Activated T-helper 1 cell treated with anti-CD3 and anti-CD28 coated beads, Interleukin-12 subunit alpha, Interleukin-12 subunit beta, Interleukin-2, Interleukin-4 antibody, amounts not matched to agents 30 ng/mL and 10 ng/mL and 1 ng/mL, durations not matched to agents 14 hours and 24 hours and 36 hours (primary cell): ENCODE measurements at regions of chr17 and their contacts with region 1.

Region 1: DNA sequence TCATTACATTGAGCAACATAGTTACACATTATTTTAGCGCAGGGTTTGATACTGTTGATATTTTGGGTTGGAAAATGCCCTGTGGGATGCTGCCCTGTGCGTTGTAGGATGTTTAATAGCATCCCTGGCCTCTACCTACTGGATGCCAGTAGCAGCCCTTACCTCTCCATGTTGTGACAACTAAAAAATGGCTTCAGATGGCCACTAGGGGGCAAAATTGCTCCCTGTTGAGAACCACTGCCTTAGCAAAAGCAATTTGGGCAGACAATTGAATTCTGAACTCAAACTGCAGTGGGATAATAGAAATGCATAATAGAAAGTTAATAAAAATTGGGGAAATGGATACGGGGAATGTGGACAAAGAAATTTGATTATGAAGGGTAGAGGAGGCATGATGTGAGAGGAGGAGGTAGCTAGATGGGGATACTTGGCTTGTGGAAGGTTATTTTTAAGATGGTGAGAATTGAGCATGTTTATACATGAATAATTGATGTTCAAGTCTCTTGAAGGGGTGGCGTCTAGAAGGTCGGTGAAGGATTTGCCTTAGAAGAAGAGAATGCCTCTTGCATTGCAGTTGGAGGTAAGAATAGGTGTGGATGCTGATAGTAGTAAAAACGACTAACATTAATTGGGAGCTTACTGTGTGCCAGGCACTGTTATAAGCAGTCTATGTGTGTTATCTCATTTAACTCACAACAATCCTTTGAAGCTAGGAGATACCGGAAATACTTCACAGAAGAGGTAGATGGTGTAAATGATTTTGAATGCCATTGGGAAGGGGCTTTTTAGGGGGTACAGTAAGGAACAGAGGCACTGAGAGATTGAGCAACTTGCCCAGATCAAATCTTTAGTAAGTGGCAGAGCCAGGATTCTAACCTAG is 19.0 kb downstream of the HEATR9 start:
- DNase-seq: peak; percentile 49
- H3K4me3 Mint-ChIP-seq: no peak overlapping the region
- H3K27ac Mint-ChIP-seq: peak overlapping the region; percentile 42
- H3K4me1 Mint-ChIP-seq: peaks cover 19% of the 10 kb centered on the region
- H3K27me3 Mint-ChIP-seq: no peaks in the 10 kb centered on the region

Region 2: GRCh38 chr17:35788504-35789368 is 61.0 kb before region 1 on chr17:
- intact Hi-C with region 1: no loop called
- DNase-seq: no peak
- H3K4me3 Mint-ChIP-seq: no peak overlapping the region
- H3K27ac Mint-ChIP-seq: no peak overlapping the region
- H3K4me1 Mint-ChIP-seq: no peaks in the 10 kb centered on the region
- H3K27me3 Mint-ChIP-seq: peaks cover 49% of the 10 kb centered on the region

Region 3: GRCh38 chr17:35898283-35899070 is 48.8 kb after region 1 on chr17:
- intact Hi-C with region 1: loop called (anchors 1 kb)
- DNase-seq: no peak
- H3K4me3 Mint-ChIP-seq: no peak overlapping the region
- H3K27ac Mint-ChIP-seq: peak overlapping the region; percentile 36
- H3K4me1 Mint-ChIP-seq: peaks cover 55% of the 10 kb centered on the region
- H3K27me3 Mint-ChIP-seq: peaks cover 2% of the 10 kb centered on the region

Region 4: GRCh38 chr17:35930211-35931065 is 80.7 kb after region 1 on chr17 and contains the start of gene RDM1:
- intact Hi-C with region 1: loop called (anchors 1 kb)
- DNase-seq: peak; percentile 89
- H3K4me3 Mint-ChIP-seq: peak within 1 kb of the TSS; percentile 88
- H3K27ac Mint-ChIP-seq: peak within 1 kb of the TSS; percentile 90
- H3K4me1 Mint-ChIP-seq: peaks cover 29% of the 10 kb centered on the region
- H3K27me3 Mint-ChIP-seq: peaks cover 18% of the 10 kb centered on the region
- total RNA-seq, gene RDM1: 1.7 and 2.3 TPM in 2 replicates

Region 5: GRCh38 chr17:35969558-35970380 is 120.1 kb after region 1 on chr17:
- intact Hi-C with region 1: loop called (anchors 1 kb)
- DNase-seq: peak; percentile 61
- H3K4me3 Mint-ChIP-seq: no peak overlapping the region
- H3K27ac Mint-ChIP-seq: no peak overlapping the region
- H3K4me1 Mint-ChIP-seq: no peaks in the 10 kb centered on the region
- H3K27me3 Mint-ChIP-seq: peaks cover 12% of the 10 kb centered on the region

Region 6: GRCh38 chr17:36008998-36009665 is 159.4 kb after region 1 on chr17:
- intact Hi-C with region 1: loop called (anchors 1 kb)
- DNase-seq: no peak
- H3K4me3 Mint-ChIP-seq: no peak overlapping the region
- H3K27ac Mint-ChIP-seq: no peak overlapping the region
- H3K4me1 Mint-ChIP-seq: peaks cover 7% of the 10 kb centered on the region
- H3K27me3 Mint-ChIP-seq: peaks cover 8% of the 10 kb centered on the region

Region 7: DNA sequence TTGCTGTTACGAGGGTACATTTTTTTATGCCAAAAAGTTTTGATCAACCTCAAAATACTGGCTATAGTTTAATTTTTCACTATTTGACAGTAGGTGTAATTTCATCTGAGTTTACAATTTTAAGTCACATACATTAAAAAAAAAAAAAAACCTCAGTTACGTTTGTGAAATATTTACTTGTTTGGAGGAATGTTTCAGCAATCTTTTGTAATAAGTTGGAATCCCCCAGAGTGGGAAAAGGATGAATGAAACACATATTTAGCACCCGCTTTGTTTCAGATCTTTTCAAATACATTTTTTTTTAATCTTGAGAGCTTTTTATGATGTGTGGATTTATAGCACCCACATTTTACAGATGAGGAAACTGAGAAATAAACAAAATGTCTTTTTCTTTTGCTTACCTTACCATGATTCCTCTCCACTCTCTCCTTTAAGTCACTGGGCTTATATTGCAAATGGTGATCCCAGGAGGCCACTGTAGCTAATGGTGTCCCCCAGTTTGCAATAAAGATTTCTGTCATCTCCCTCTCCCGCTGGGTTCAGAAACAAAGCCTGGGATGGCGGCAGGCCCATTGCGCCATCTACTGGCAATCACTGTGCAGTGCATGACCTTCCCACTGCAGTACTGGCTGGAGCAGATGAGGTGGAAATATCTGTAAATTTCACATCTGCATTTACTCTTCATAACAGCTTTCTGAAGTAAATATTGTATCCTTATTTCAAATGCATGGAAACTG is 299.0 kb after region 1 on chr17:
- intact Hi-C with region 1: loop called (anchors 1 kb)
- DNase-seq: peak; percentile 48
- H3K4me3 Mint-ChIP-seq: no peak overlapping the region
- H3K27ac Mint-ChIP-seq: no peak overlapping the region
- H3K4me1 Mint-ChIP-seq: peaks cover 4% of the 10 kb centered on the region
- H3K27me3 Mint-ChIP-seq: peaks cover 11% of the 10 kb centered on the region